OCI-LY7 (cell line): ENCODE measurements at regions of chr14 and their contacts with region 1.

Region 1: GRCh38 chr14:102437997-102438915 is 71.3 kb downstream of the ANKRD9 start:
- DNase-seq: peak; percentile 80
- H3K4me3 ChIP-seq: peak overlapping the region; percentile 11
- H3K27ac ChIP-seq: no peak overlapping the region
- H3K4me1 ChIP-seq: no peaks in the 10 kb centered on the region
- CTCF ChIP-seq: peak; percentile 83

Region 2: GRCh38 chr14:102323102-102323501 is 115.2 kb before region 1 on chr14:
- CTCF ChIA-PET with region 1: no interaction called
- POLR2A ChIA-PET with region 1: interaction called, 10 read pairs
- intact Hi-C with region 1: no loop called
- DNase-seq: peak; percentile 65
- H3K4me3 ChIP-seq: no peak overlapping the region
- H3K27ac ChIP-seq: no peak overlapping the region
- H3K4me1 ChIP-seq: peaks cover 26% of the 10 kb centered on the region
- CTCF ChIP-seq: peak; percentile 81

Region 3: GRCh38 chr14:102516531-102517415 is 78.5 kb after region 1 on chr14:
- CTCF ChIA-PET with region 1: no interaction called
- POLR2A ChIA-PET with region 1: no interaction called
- intact Hi-C with region 1: loop called (anchors 1 kb)
- DNase-seq: peak; percentile 46
- H3K4me3 ChIP-seq: peak overlapping the region; percentile 55
- H3K27ac ChIP-seq: no peak overlapping the region
- H3K4me1 ChIP-seq: no peaks in the 10 kb centered on the region
- CTCF ChIP-seq: peak; percentile 79

Region 4: DNA sequence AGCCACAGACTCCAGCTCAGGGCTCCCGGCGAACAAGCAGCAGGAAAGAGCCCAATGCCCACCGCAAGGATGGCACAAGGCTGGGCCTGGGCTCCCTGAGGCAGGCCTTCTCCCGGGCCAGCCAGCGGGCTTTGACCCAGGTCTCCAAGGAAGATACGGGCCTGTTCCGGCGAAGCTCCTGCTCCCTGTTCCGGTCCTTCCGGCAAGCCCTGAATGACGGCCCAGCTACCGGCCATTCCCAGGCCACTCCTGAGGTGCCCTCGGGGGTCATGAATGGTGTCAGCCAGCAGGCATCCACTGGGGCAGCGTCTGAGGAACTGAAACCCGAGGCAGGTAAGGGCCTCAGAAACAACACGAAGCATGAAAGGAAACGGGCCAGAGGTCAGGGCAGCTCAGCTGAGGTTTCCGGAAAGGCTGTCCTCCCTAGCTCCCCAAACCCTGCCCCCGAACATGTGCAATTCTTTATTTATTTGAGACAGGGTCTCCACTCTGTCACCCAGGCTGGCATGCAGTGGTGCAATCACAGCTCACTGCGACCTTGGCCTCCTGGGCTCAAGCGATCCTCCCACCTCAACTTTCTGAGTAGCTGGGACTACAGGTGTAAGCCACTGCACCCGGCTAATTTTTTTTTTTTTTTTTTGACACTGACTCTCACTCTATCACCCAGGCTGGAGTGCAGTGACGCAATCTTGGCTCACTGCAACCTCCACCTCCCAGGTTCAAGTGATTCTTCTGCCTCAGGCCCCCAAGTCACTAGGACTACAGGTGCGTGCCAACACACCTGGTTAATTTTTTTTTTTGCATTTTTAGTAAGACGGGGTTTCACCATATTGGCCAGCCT is 662.2 kb after region 1 on chr14:
- CTCF ChIA-PET with region 1: no interaction called
- POLR2A ChIA-PET with region 1: no interaction called
- intact Hi-C with region 1: no loop called
- DNase-seq: peak; percentile 57
- H3K4me3 ChIP-seq: no peak overlapping the region
- H3K27ac ChIP-seq: peak overlapping the region; percentile 31
- H3K4me1 ChIP-seq: peaks cover 23% of the 10 kb centered on the region
- CTCF ChIP-seq: no peak